ENCODE measurements at regions of chr16 and their contacts with region 1.

Region 1: GRCh38 chr16:73068541-73069401 is 20.8 kb upstream of the ZFHX3 start:
- DNase-seq: peak; percentile 92
- H3K4me3 ChIP-seq: no peak overlapping the region
- H3K27ac ChIP-seq: peak overlapping the region; percentile 92
- H3K4me1 ChIP-seq: peaks cover 76% of the 10 kb centered on the region
- H3K27me3 ChIP-seq: no peaks in the 10 kb centered on the region
- CTCF ChIP-seq: no peak
- POLR2A ChIP-seq: peak; percentile 78

Region 2: DNA sequence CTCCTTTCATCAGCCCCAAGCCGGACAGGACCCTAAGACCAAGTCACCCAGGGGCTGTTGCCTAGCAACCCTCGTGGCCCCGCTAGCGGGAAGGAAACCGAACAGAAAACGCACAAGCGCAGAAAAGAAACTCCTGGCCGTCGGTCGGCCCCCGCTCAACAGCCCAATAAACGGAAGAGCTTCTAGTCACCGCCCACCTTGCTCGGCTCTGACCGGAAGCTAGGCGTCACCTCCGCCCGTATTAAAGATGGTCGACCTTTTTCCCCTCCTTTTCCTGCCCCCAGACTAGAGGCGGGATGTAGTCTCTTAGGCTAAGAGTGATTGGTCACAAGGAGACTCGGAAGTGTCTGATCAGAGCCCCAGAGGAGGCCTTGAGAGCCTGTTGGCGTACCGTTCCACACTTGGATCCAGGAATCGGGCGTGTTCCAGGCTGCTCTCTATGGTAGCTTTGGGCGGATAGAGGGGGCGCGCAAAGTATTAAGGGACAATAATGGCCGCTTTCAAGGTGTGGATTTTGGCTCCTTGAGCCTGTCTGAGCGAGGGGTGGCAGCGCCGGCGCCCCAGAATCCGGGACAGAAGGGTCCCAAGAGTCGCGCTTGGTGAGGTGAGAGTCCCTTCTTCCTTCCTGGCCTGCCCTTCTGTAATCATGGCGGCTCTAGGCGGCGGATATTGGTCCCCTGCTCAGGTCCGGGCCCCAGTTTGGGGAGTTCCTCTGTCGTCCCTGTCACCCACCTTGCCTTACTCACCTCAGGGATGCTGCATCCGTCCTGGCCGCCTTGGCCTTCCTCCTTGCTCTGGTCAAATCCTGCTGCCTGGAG is 975.1 kb before region 1 on chr16 and contains the starts of genes DHX38 and TXNL4B:
- CTCF ChIA-PET with region 1: no interaction called
- POLR2A ChIA-PET with region 1: no interaction called
- dilution Hi-C with region 1: no loop called
- intact Hi-C with region 1: loop called (anchors 5 kb)
- DNase-seq: peak; percentile 99
- H3K4me3 ChIP-seq: peak within 1 kb of the TSS; percentile 59 to 98 (median 87)
- H3K27ac ChIP-seq: peak within 1 kb of the TSS; percentile 80
- H3K4me1 ChIP-seq: peaks cover 18% of the 10 kb centered on the region
- H3K27me3 ChIP-seq: no peaks in the 10 kb centered on the region
- CTCF ChIP-seq: no peak
- POLR2A ChIP-seq: peak; percentile 81
- total RNA-seq, gene DHX38: 78.4 and 78.6 TPM in 2 replicates
- total RNA-seq, gene TXNL4B: 11.7 and 12.7 TPM in 2 replicates

Region 3: GRCh38 chr16:72480901-72481300 is 587.9 kb before region 1 on chr16:
- CTCF ChIA-PET with region 1: no interaction called
- POLR2A ChIA-PET with region 1: no interaction called
- dilution Hi-C with region 1: no loop called
- intact Hi-C with region 1: loop called (anchors 2 kb)
- DNase-seq: peak; percentile 29
- H3K4me3 ChIP-seq: no peak overlapping the region
- H3K27ac ChIP-seq: peak overlapping the region; percentile 55
- H3K4me1 ChIP-seq: peaks cover 27% of the 10 kb centered on the region
- H3K27me3 ChIP-seq: no peaks in the 10 kb centered on the region
- CTCF ChIP-seq: no peak
- POLR2A ChIP-seq: no peak

Region 4: GRCh38 chr16:72664509-72665225 is 404.1 kb before region 1 on chr16:
- CTCF ChIA-PET with region 1: no interaction called
- POLR2A ChIA-PET with region 1: no interaction called
- dilution Hi-C with region 1: no loop called
- intact Hi-C with region 1: loop called (anchors 10 kb)
- DNase-seq: peak; percentile 98
- H3K4me3 ChIP-seq: peak overlapping the region; percentile 89 to 96 (median 95)
- H3K27ac ChIP-seq: peak overlapping the region; percentile 88
- H3K4me1 ChIP-seq: peaks cover 10% of the 10 kb centered on the region
- H3K27me3 ChIP-seq: no peaks in the 10 kb centered on the region
- CTCF ChIP-seq: no peak
- POLR2A ChIP-seq: peak; percentile 59

Region 5: DNA sequence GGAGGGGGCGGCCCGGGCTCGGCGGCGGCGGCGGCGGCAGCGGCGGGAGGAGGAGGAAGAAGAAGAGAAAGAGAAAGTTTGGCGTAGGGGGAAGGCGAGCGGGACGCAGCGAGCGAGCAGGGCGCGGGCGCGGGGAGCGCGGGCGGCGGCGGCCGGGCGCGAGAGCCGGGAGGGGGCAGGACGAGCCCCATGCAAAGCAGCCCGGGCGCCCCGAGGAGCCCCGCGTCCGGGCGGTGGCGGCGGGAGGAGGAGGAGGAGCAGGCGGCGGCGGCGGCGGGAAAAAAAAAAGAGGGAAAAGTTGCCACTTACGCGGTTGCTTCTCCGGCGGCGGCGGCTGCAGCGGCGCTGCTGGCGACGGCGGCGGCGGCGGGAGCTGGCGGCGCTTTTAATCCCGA is 10.6 kb before region 1 on chr16:
- CTCF ChIA-PET with region 1: interaction called, 7 read pairs
- POLR2A ChIA-PET with region 1: interaction called, 9 read pairs
- dilution Hi-C with region 1: no loop called
- intact Hi-C with region 1: loop called (anchors 1 kb)
- DNase-seq: peak; percentile 45
- H3K4me3 ChIP-seq: peak overlapping the region; percentile 35 to 94 (median 49)
- H3K27ac ChIP-seq: peak overlapping the region; percentile 65
- H3K4me1 ChIP-seq: peaks cover 61% of the 10 kb centered on the region
- H3K27me3 ChIP-seq: no peaks in the 10 kb centered on the region
- CTCF ChIP-seq: no peak
- POLR2A ChIP-seq: no peak

Region 6: GRCh38 chr16:73143576-73144422 is 75.0 kb after region 1 on chr16:
- CTCF ChIA-PET with region 1: interaction called, 5 read pairs
- POLR2A ChIA-PET with region 1: no interaction called
- dilution Hi-C with region 1: no loop called
- intact Hi-C with region 1: loop called (anchors 2 kb)
- DNase-seq: peak; percentile 59
- H3K4me3 ChIP-seq: peak overlapping the region; percentile 22 to 72 (median 53)
- H3K27ac ChIP-seq: peak overlapping the region; percentile 17
- H3K4me1 ChIP-seq: peaks cover 12% of the 10 kb centered on the region
- H3K27me3 ChIP-seq: peaks cover 1 to 10% of the 10 kb centered on the region in 2 experiments
- CTCF ChIP-seq: no peak
- POLR2A ChIP-seq: no peak

Region 7: DNA sequence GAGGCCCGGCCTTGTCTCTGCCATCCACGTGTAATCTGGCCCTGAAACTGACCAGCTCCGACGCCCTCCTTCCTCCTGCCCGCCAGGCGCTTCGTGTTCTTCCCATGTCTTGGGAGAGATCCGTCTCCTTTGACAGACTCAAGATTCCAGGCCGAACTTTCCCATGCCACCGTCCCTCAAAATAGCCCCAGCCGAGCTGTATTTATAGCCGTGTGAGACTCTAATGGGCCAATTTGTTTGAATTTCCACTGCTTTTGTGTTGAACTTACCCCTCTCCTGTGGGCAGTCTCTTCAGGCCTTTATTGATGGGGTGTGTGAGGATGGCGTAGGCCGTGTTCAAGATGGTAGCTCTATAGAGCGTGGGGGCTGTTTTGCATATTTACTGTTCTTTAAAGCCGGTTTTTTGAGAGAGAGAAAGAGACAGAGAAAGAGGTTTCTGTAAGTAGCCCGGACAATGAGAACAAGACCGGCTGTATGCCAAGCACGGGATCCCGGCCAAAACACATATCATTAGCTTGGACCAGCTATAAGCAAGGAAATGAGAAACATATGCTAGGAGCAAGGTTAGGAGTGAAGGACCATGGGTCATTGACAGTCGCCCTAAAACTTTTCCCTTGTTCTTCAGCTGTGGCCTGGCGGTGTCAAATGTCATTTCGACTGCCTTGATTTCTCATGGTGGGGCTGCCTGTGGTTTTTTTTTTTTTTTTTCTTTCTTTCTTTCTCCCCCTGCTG is 103.6 kb after region 1 on chr16:
- CTCF ChIA-PET with region 1: interaction called, 22 read pairs
- POLR2A ChIA-PET with region 1: no interaction called
- dilution Hi-C with region 1: no loop called
- intact Hi-C with region 1: loop called (anchors 1 kb)
- DNase-seq: peak; percentile 98
- H3K4me3 ChIP-seq: no peak overlapping the region
- H3K27ac ChIP-seq: peak overlapping the region; percentile 72
- H3K4me1 ChIP-seq: peaks cover 29% of the 10 kb centered on the region
- H3K27me3 ChIP-seq: no peaks in the 10 kb centered on the region
- CTCF ChIP-seq: peak; percentile 17 to 31
- POLR2A ChIP-seq: peak; percentile 55

Region 8: GRCh38 chr16:73289232-73289631 is 220.5 kb after region 1 on chr16:
- CTCF ChIA-PET with region 1: no interaction called
- POLR2A ChIA-PET with region 1: no interaction called
- dilution Hi-C with region 1: no loop called
- intact Hi-C with region 1: no loop called
- DNase-seq: no peak
- H3K4me3 ChIP-seq: no peak overlapping the region
- H3K27ac ChIP-seq: no peak overlapping the region
- H3K4me1 ChIP-seq: no peaks in the 10 kb centered on the region
- H3K27me3 ChIP-seq: no peaks in the 10 kb centered on the region
- CTCF ChIP-seq: no peak
- POLR2A ChIP-seq: no peak